A549 (cell line): ENCODE measurements at regions of chr14 and their contacts with region 1.

Region 1: GRCh38 chr14:61461808-61462275 is 140.5 kb downstream of the PRKCH start:
- DNase-seq: peak; percentile 72 to 73
- ATAC-seq: peak; percentile 74
- H3K4me3 ChIP-seq: no peak overlapping the region
- H3K27ac ChIP-seq: peak overlapping the region; percentile 86 to 89
- H3K4me1 ChIP-seq: peaks cover 45% of the 10 kb centered on the region
- CTCF ChIP-seq: peak; percentile 90
- EP300 ChIP-seq: no peak
- POLR2A ChIP-seq: no peak
- RAD21 ChIP-seq: peak; percentile 93 to 95

Region 2: DNA sequence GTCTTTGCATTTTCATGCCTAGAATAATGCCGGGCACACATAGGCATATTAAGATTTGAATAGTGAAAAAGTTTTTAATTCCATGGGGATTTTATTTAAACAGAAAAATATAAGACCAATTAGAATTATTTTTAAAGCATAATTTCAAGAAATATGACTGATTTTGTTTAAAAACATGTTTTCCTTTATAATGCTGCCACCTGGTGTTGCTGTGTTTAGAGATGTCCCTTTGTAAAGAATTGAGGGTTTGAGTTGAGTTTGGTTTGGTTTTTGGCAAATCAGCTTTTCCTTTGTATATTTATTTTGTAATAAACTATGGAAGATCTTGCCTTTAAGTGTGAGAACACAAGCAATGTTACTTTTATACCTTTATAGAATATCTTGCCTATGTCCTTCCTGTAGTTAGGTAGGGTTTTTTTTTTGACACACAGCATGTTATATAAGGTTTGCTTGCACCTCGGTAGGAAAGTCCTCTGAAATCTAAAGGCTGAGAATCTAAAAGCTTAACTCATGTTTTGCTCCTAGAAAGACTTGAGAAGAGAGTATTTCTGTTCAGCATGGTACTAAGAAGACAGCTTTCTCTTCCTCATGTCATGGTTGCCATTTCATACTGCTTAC is 269.0 kb after region 1 on chr14:
- CTCF ChIA-PET with region 1: interaction called, 28 read pairs
- POLR2A ChIA-PET with region 1: no interaction called
- DNase-seq: no peak
- ATAC-seq: no peak
- H3K4me3 ChIP-seq: no peak overlapping the region
- H3K27ac ChIP-seq: peak overlapping the region in 1 of 2 experiments; percentile 5; a peak in 2 of 6 replicates
- H3K4me1 ChIP-seq: peaks cover 93% of the 10 kb centered on the region
- CTCF ChIP-seq: peak; percentile 66
- EP300 ChIP-seq: no peak
- POLR2A ChIP-seq: no peak
- RAD21 ChIP-seq: peak; percentile 69 to 75

Region 3: GRCh38 chr14:61750708-61751474 is 289.0 kb after region 1 on chr14:
- CTCF ChIA-PET with region 1: interaction called, 16 read pairs
- POLR2A ChIA-PET with region 1: no interaction called
- DNase-seq: peak; percentile 76 to 83
- ATAC-seq: peak; percentile 79 to 85
- H3K4me3 ChIP-seq: peak overlapping the region; percentile 38
- H3K27ac ChIP-seq: peak overlapping the region; percentile 72 to 89
- H3K4me1 ChIP-seq: peaks cover 69% of the 10 kb centered on the region
- CTCF ChIP-seq: no peak
- EP300 ChIP-seq: no peak
- POLR2A ChIP-seq: peak; percentile 63
- RAD21 ChIP-seq: peak in 1 of 2 experiments; percentile 16; a peak in 1 of 5 replicates